ENCODE measurements at regions of chr16 and their contacts with region 1.

Region 1: DNA sequence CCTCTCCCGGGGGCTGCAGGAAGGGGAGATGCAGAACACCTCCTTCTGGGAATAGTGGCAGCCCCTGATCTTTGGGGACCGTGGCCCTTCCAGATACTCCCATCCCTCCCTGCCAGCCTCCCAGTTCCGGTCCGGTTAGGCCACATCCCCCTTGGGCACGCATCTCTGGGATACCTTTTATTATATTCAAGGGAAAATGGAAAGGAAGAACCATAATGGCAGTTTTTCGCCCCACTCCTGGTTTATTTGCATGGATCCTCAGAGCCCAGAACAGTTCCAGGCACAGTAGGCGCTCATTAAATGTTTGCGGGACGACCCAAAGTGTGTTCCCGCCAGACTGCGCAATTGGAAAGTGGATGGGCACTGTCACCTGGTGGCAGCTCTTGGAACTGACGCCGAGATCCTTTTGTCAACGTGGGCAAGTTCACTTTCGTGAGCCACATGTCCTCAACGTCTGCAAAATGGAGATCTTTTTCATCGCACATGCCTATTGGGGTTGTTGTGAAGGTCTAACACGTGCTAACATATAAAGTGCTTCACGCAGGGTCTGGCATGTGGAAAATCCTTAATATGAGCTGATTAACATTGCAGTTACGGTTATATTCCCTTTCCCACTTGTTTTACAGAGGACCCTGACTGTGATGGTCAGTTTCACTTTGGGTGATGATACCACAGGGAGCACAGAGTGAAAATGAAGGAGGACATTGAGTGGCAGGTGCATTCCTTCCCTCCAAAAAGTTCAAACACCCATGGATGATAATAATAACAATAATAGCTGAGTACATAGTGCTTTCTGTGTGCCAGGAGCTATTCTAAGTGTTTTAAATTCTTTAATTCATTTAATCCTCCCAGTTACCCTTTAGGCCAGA is 1.7 kb upstream of the GPRC5B start:
- DNase-seq: peak; percentile 76
- ATAC-seq: peak; percentile 63
- H3K4me3 ChIP-seq: peak overlapping the region in 1 of 3 experiments; percentile 39; a peak in 1 of 6 replicates
- H3K27ac ChIP-seq: no peak overlapping the region
- H3K4me1 ChIP-seq: peaks cover 25% of the 10 kb centered on the region
- H3K27me3 ChIP-seq: peaks cover 11 to 39% of the 10 kb centered on the region in 2 experiments
- CTCF ChIP-seq: peak; percentile 100
- EP300 ChIP-seq: peak in 1 of 2 experiments; percentile 15; a peak in 1 of 4 replicates
- POLR2A ChIP-seq: no peak
- RAD21 ChIP-seq: peak; percentile 99

Region 2: GRCh38 chr16:19555162-19555937 is 331.0 kb before region 1 on chr16 and contains the start of gene VPS35L:
- CTCF ChIA-PET with region 1: interaction called, 30 read pairs
- POLR2A ChIA-PET with region 1: no interaction called
- in situ Hi-C with region 1: no loop called
- intact Hi-C with region 1: loop called (anchors 1 kb)
- DNase-seq: peak; percentile 92
- ATAC-seq: peak; percentile 99
- H3K4me3 ChIP-seq: peak within 1 kb of the TSS; percentile 38 to 69 (median 57)
- H3K27ac ChIP-seq: peak within 1 kb of the TSS; percentile 48
- H3K4me1 ChIP-seq: peaks cover 19% of the 10 kb centered on the region
- H3K27me3 ChIP-seq: no peaks in the 10 kb centered on the region
- CTCF ChIP-seq: peak; percentile 90
- EP300 ChIP-seq: no peak
- POLR2A ChIP-seq: peak; percentile 48 to 79; a peak in 3 of 4 replicates
- RAD21 ChIP-seq: peak; percentile 48; the same call in 1 of the 2 replicates
- total RNA-seq, gene VPS35L: 0.97 and 1.4 TPM in 2 replicates

Region 3: DNA sequence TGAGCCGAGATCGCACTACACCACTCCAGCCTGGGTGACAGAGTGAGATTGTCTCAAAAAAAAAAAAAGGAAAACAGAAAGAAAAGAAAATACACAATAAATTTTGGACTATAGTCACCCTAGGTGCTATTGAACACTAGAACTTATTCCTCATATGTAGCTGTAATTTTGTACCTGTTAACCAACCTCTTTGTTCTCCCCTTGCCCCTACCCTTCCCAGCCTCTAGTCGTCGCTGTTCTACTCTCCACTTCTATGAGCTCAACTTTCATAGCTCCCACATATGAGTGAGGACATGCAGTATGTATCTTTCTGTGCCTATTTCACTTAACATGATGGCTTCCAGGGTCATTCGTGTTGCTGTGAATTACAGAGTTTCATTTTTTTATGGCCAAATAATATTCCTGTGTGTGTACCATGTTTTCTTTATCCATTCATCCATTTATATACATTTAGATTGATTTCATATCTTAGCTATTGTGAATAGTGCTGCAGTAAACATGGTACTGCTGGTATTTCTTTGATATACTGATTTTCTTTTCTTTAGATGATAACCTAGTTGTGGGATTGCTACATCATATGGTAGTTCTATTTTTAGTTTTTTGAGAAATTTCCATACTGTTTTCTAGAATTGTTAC is 302.5 kb before region 1 on chr16:
- CTCF ChIA-PET with region 1: interaction called, 17 read pairs
- POLR2A ChIA-PET with region 1: no interaction called
- in situ Hi-C with region 1: no loop called
- intact Hi-C with region 1: loop called (anchors 1 kb)
- DNase-seq: peak; percentile 77
- ATAC-seq: peak; percentile 98
- H3K4me3 ChIP-seq: no peak overlapping the region
- H3K27ac ChIP-seq: no peak overlapping the region
- H3K4me1 ChIP-seq: 0 out of 2 replicates have a peak, but pooled peaks cover 6% of the 10 kb centered on the region
- H3K27me3 ChIP-seq: no peaks in the 10 kb centered on the region
- CTCF ChIP-seq: peak; percentile 90
- EP300 ChIP-seq: no peak
- POLR2A ChIP-seq: no peak
- RAD21 ChIP-seq: no peak

Region 4: DNA sequence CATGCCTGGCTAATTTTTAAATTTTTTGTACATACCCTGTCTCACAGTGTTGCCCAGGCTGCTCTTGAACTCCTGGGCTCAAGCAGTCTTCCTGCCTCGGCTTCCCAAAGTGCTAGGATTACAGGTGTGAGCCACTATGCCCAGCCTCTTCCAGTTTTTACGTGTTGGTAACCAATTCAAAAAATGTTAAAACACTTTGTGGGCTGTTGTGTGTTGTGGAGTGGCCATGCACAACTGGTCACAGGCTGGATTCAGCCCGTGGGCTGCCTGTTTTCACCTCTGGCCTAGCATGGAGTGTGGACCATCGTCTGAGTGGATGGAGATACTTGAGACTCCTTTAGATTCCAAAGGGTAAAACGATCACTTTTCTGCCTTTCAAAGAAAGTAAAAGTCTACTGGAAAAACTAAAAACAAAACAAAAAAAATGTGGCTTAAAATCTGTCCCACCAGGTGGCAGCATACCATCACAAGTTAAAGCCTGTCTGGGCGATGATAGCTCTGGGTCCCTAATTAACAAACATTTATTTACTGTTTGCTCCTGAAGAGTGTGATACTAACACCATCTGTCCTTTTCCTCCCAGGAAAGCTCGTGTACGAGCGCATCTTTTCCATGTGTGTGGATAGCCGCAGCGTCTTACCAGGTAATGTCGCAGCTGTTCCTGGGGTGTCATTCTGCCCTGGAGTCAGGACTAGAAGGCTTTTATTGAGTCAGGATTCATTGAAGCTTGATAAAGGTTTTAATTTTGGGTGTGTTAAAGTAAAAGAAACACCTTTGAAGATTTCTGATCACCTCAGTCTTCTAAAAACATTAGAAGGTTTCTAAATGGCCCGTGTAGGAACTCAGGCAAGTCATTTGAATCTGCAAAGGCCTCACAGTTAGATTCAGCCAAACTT is 285.0 kb before region 1 on chr16:
- CTCF ChIA-PET with region 1: interaction called, 234 read pairs
- POLR2A ChIA-PET with region 1: interaction called, 6 read pairs
- in situ Hi-C with region 1: loop called (anchors 5 kb)
- intact Hi-C with region 1: loop called (anchors 1 kb)
- DNase-seq: peak; percentile 47
- ATAC-seq: peak; percentile 48
- H3K4me3 ChIP-seq: no peak overlapping the region
- H3K27ac ChIP-seq: no peak overlapping the region
- H3K4me1 ChIP-seq: peaks cover 9% of the 10 kb centered on the region
- H3K27me3 ChIP-seq: no peaks in the 10 kb centered on the region
- CTCF ChIP-seq: peak; percentile 89
- EP300 ChIP-seq: no peak
- POLR2A ChIP-seq: no peak
- RAD21 ChIP-seq: peak; percentile 91

Region 5: DNA sequence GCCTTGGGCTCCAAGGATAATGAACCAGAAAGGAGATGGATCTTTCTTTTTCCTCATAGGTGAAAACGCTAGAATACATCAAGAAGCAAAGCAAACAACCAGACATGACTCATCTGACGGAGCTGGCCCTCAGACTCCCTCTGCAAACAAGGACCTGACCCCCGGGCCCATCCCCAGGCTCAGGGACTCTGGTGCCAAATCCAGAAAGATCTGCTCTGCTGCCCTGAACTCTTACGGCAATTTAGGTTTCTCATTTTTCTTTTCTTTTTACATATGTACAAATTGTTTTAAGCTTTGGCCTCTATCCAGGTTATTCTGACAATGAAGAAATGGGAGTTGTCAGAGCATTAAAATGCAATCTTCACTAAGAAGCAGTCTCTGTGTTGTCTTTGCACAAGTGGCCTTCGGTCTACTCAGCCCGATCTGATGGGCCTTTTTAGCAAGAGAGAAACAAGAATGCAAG is 186.0 kb before region 1 on chr16:
- CTCF ChIA-PET with region 1: no interaction called
- POLR2A ChIA-PET with region 1: no interaction called
- in situ Hi-C with region 1: no loop called
- intact Hi-C with region 1: loop called (anchors 5 kb)
- DNase-seq: peak; percentile 79
- ATAC-seq: peak; percentile 92
- H3K4me3 ChIP-seq: no peak overlapping the region
- H3K27ac ChIP-seq: no peak overlapping the region
- H3K4me1 ChIP-seq: peaks cover 20% of the 10 kb centered on the region
- H3K27me3 ChIP-seq: no peaks in the 10 kb centered on the region
- CTCF ChIP-seq: no peak
- EP300 ChIP-seq: peak in 1 of 2 experiments; percentile 50; a peak in 2 of 4 replicates
- POLR2A ChIP-seq: no peak
- RAD21 ChIP-seq: no peak

Region 6: DNA sequence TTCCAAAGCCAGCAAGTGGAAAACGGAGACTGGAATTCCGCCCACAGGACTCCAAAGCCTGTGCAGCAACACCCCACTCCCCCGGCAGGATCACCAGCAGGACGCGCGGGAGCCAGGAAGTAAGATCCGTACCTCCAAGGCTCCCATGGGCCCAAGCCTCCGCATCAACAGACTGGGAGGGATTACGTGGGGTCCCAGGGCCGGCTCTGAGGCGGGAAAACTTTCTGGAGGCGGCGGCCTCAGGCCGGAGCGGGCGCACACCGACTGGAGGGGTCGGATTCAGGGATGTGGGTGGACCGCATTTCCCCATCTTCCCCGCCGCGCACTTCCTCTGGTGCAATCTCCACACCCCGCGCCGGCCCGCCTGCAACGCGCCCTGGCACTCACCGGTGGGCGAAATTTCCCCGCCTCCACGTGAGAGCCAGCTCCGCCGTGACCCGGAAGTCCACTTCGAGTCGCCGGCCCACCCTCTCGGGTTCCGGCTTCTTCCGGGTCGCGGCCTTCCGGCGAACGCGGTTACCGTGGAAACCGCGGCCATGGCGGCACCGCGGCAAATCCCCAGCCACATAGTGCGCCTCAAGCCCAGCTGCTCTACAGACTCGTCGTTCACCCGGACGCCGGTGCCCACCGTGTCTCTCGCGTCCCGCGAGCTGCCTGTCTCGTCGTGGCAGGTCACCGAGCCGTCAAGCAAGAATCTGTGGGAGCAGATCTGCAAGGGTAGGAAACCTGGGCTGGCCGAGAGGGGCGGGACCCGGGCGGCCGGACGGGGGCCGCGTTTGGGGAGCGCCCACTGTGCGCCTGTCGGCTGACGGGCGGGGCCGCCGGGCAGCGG is 168.3 kb before region 1 on chr16 and contains the starts of genes IQCK and KNOP1:
- CTCF ChIA-PET with region 1: no interaction called
- POLR2A ChIA-PET with region 1: no interaction called
- in situ Hi-C with region 1: loop called (anchors 5 kb)
- intact Hi-C with region 1: loop called (anchors 5 kb)
- DNase-seq: peak; percentile 92
- ATAC-seq: peak; percentile 94
- H3K4me3 ChIP-seq: peak within 1 kb of the TSS; percentile 74 to 98 (median 98)
- H3K27ac ChIP-seq: peak within 1 kb of the TSS; percentile 74
- H3K4me1 ChIP-seq: peaks cover 27% of the 10 kb centered on the region
- H3K27me3 ChIP-seq: no peaks in the 10 kb centered on the region; a peak in 1 of 5 replicates
- CTCF ChIP-seq: no peak
- EP300 ChIP-seq: peak in 1 of 2 experiments; percentile 57; a peak in 1 of 4 replicates
- POLR2A ChIP-seq: peak; percentile 87 to 95
- RAD21 ChIP-seq: peak; percentile 75
- total RNA-seq, gene IQCK: 7.3 and 11.9 TPM in 2 replicates
- total RNA-seq, gene KNOP1: 57.5 and 80.3 TPM in 2 replicates

Region 7: GRCh38 chr16:19831678-19832077 is 54.6 kb before region 1 on chr16:
- CTCF ChIA-PET with region 1: no interaction called
- POLR2A ChIA-PET with region 1: no interaction called
- in situ Hi-C with region 1: no loop called
- intact Hi-C with region 1: no loop called
- DNase-seq: no peak
- ATAC-seq: no peak
- H3K4me3 ChIP-seq: no peak overlapping the region
- H3K27ac ChIP-seq: no peak overlapping the region
- H3K4me1 ChIP-seq: no peaks in the 10 kb centered on the region
- H3K27me3 ChIP-seq: no peaks in the 10 kb centered on the region
- CTCF ChIP-seq: no peak
- EP300 ChIP-seq: no peak
- POLR2A ChIP-seq: no peak
- RAD21 ChIP-seq: no peak

Measured in HepG2 (cell line).